CD4-positive, alpha-beta memory T cell (primary cell): ENCODE measurements at regions of chrX and their contacts with region 1.

Region 1: DNA sequence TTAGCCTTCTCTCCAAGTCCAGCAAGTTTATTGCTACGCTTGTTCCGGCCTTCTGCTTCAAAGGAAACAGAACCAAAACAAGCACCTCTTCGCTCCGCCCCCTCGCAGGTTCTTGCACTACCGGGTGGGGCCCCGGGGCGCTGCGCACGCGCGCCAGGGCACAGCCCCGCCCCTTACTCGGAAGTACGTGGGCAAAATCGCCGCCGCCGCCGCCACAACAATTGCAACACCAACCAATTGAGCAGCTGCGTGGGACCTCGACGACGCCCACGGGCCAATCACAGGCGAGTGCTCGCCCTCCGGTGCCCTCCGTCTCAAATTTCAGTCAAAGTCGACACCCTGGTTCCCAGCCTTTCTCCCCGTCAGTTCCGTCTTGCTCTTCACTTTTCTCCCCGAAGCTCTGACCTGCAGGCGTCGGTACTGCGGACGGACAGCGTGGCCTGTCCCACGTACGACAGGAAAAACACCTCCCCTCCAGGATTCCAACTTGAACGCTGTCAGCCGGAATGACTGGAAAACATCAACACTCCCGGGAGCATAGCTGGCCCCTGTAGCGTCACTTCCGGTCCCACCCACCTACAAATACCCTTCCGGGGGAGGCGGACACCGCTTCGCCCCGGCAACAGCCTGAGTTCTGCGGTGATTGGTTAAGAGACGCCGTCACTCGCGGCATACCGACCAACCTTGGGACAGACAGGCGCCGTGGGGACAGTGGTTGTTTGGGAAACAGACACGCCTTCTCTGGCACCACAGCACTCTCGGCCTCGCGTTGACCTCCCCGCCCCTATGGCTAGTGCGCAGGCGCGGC is 624 bp upstream of the OTUD5 start:
- DNase-seq: peak; percentile 92 to 98 (median 96)
- H3K4me3 ChIP-seq: peak overlapping the region; percentile 47 to 75
- H3K4me3 Mint-ChIP-seq: peak overlapping the region; percentile 96 to 99 (median 98)
- H3K27ac ChIP-seq: peak overlapping the region; percentile 98
- H3K27ac Mint-ChIP-seq: peak overlapping the region; percentile 98 to 100 (median 100)
- H3K4me1 ChIP-seq: peaks cover 49% of the 10 kb centered on the region
- H3K4me1 Mint-ChIP-seq: peaks cover 14 to 64% (median 38%) of the 10 kb centered on the region in 4 donors
- H3K27me3 ChIP-seq: no peaks in the 10 kb centered on the region
- H3K27me3 Mint-ChIP-seq: no peaks in the 10 kb centered on the region

Region 2: DNA sequence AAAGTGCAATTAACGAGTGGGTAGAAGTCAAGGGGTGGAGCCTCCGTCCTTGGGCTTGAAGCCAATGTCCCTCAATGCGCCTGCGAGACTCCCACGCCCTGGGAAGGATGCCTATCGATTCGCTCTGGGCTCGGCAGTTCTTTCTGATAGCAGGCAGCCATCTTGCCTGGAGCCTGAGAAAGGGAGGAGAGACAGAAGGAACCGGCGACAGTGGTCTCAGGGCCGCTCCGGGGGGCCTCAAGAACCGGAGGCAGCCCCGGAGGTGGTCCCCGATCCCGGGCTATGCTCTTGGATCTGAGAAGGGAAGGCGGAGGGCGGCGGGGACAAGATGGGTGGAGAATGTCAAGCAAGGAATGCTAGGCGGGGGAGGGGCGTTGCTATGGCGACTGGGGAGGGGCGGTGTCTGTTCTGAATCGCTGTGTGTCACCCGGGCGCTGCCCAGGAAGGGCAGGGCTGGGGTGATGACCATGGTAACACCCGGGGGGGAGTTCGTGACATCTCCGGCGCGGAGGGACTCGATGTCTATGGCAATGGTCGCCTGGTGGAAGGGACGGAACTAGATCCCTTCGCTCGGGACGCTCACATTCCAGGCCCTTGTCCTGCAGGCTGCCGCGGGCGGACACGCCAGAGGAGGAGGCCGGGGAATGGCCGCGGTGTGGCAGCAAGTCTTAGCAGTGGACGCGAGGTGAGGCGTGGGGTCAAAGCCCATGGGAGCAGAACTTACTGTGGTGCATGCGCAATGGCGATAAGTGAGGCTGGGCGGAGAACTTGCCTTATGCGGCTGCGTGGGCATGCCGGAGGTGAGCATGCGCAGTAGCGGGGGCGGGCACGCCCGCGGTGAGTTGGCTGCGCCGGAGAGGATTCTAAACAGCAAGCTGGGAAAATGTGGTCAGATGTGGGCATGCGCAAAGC is 360.4 kb before region 1 on chrX and contains the start of gene WDR13:
- CTCF ChIA-PET with region 1: no interaction called
- POLR2A ChIA-PET with region 1: no interaction called
- intact Hi-C with region 1: loop called (anchors 1 kb)
- DNase-seq: peak; percentile 88 to 92 (median 91)
- H3K4me3 ChIP-seq: peak within 1 kb of the TSS; percentile 84 to 85
- H3K4me3 Mint-ChIP-seq: peak within 1 kb of the TSS; percentile 90 to 99 (median 97)
- H3K27ac ChIP-seq: peak within 1 kb of the TSS; percentile 95
- H3K27ac Mint-ChIP-seq: peak within 1 kb of the TSS; percentile 96 to 100 (median 99)
- H3K4me1 ChIP-seq: peaks cover 12% of the 10 kb centered on the region
- H3K4me1 Mint-ChIP-seq: peaks cover 7 to 17% (median 13%) of the 10 kb centered on the region in 4 donors
- H3K27me3 ChIP-seq: no peaks in the 10 kb centered on the region
- H3K27me3 Mint-ChIP-seq: no peaks in the 10 kb centered on the region
- total RNA-seq, gene WDR13: 47.4 to 49.7 TPM

Region 3: GRCh38 chrX:48897621-48898306 is 60.3 kb before region 1 on chrX and contains the starts of genes PQBP1 and TIMM17B:
- CTCF ChIA-PET with region 1: no interaction called
- POLR2A ChIA-PET with region 1: interaction called, 23 read pairs
- intact Hi-C with region 1: no loop called
- DNase-seq: peak; percentile 88 to 93 (median 92)
- H3K4me3 ChIP-seq: peak within 1 kb of the TSS; percentile 78 to 92
- H3K4me3 Mint-ChIP-seq: peak within 1 kb of the TSS; percentile 86 to 96 (median 92)
- H3K27ac ChIP-seq: peak within 1 kb of the TSS; percentile 93
- H3K27ac Mint-ChIP-seq: peak within 1 kb of the TSS; percentile 88 to 99 (median 96)
- H3K4me1 ChIP-seq: peaks cover 24% of the 10 kb centered on the region
- H3K4me1 Mint-ChIP-seq: peaks cover 4 to 34% (median 17%) of the 10 kb centered on the region in 4 donors
- H3K27me3 ChIP-seq: no peaks in the 10 kb centered on the region
- H3K27me3 Mint-ChIP-seq: no peaks in the 10 kb centered on the region
- total RNA-seq, gene PQBP1: 59.6 to 64.4 TPM
- total RNA-seq, gene TIMM17B: 42.6 to 46.2 TPM

Region 4: DNA sequence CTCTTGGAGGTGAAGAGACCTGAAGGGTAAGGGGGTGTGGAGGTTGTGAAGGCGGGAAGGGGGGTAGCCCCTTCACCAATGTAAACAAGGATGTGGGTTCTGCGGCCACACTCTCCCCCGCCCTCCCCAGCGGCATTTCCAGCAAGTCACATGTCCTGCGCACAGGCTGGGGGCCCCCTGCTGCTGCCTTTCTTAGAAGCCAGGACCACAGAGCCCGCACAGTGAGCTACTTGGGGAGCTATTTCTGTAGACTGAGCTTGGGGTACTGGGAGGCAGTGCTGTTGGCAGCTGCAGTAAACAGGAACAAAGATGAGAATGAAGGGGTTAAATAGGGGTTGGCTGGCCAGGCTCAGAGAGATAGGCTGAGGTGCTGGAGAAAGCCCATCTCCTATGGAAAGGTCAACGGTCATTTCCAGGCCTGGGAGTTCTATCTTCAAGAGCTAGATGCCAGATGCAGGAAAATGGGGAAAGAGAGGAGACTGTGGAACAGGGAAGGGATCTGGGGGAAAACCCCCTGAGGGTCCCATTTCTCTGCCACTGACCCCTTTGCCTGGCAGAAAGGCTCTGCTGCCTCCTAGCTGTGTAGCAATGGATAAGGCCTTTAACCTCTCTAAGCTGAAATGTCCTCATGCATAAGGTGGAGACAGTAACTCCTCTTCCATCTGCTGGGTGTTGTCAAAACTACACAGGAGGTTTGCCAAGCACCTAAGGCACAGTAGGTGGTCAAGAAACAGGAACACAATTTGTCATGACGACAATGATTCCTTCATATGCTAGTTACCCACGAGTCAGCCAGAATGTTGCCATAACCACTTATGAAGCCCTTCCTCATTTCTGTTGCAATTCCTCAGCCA is 20.8 kb before region 1 on chrX:
- CTCF ChIA-PET with region 1: interaction called, 7 read pairs
- POLR2A ChIA-PET with region 1: interaction called, 99 read pairs
- intact Hi-C with region 1: loop called (anchors 2 kb)
- DNase-seq: peak; percentile 92 to 95 (median 92)
- H3K4me3 ChIP-seq: peak overlapping the region; percentile 29 to 58
- H3K4me3 Mint-ChIP-seq: peak overlapping the region; percentile 73 to 87 (median 83)
- H3K27ac ChIP-seq: peak overlapping the region; percentile 94
- H3K27ac Mint-ChIP-seq: peak overlapping the region; percentile 92 to 99 (median 96)
- H3K4me1 ChIP-seq: peaks cover 93% of the 10 kb centered on the region
- H3K4me1 Mint-ChIP-seq: peaks cover 63 to 91% (median 80%) of the 10 kb centered on the region in 4 donors
- H3K27me3 ChIP-seq: no peaks in the 10 kb centered on the region
- H3K27me3 Mint-ChIP-seq: no peaks in the 10 kb centered on the region

Region 5: GRCh38 chrX:49002091-49002935 is 44.3 kb after region 1 on chrX and contains the start of gene GRIPAP1:
- CTCF ChIA-PET with region 1: interaction called, 3 read pairs
- POLR2A ChIA-PET with region 1: interaction called, 23 read pairs
- intact Hi-C with region 1: loop called (anchors 1 kb)
- DNase-seq: peak; percentile 82 to 94 (median 86)
- H3K4me3 ChIP-seq: peak within 1 kb of the TSS; percentile 79 to 86
- H3K4me3 Mint-ChIP-seq: peak within 1 kb of the TSS; percentile 91 to 99 (median 97)
- H3K27ac ChIP-seq: peak within 1 kb of the TSS; percentile 97
- H3K27ac Mint-ChIP-seq: peak within 1 kb of the TSS; percentile 93 to 99 (median 98)
- H3K4me1 ChIP-seq: peaks cover 27% of the 10 kb centered on the region
- H3K4me1 Mint-ChIP-seq: peaks cover 17 to 36% (median 27%) of the 10 kb centered on the region in 4 donors
- H3K27me3 ChIP-seq: no peaks in the 10 kb centered on the region
- H3K27me3 Mint-ChIP-seq: no peaks in the 10 kb centered on the region
- total RNA-seq, gene GRIPAP1: 99.6 to 111 TPM

Region 6: DNA sequence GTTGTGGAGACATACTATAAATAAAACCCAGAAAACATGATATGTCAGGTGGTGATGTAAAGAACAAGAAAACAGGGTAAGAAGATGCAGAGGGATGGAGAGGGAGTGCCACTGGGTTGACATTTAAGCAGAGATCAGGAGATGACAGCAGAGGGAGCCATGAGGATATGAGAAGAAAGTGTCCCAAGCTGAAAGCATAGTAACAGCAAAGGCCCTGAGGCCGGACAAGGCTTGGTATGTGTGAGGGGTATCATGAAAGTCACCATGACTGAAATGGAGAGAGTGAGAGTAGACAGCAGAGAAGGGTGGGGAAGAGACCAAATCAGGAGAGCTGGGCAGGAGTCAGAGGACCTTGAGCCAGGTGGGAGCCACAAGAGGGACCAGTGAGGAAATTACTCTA is 162.1 kb after region 1 on chrX:
- CTCF ChIA-PET with region 1: no interaction called
- POLR2A ChIA-PET with region 1: no interaction called
- intact Hi-C with region 1: loop called (anchors 5 kb)
- DNase-seq: no peak
- H3K4me3 ChIP-seq: no peak overlapping the region
- H3K4me3 Mint-ChIP-seq: peak overlapping the region in 2 of 8 donors; percentile 25 to 73
- H3K27ac ChIP-seq: no peak overlapping the region
- H3K27ac Mint-ChIP-seq: no peak overlapping the region
- H3K4me1 ChIP-seq: peaks cover 34% of the 10 kb centered on the region
- H3K4me1 Mint-ChIP-seq: peaks cover 23 to 50% (median 33%) of the 10 kb centered on the region in 4 donors
- H3K27me3 ChIP-seq: no peaks in the 10 kb centered on the region
- H3K27me3 Mint-ChIP-seq: no peaks in the 10 kb centered on the region